Activated T-helper 1 cell treated with anti-CD3 and anti-CD28 coated beads, Interleukin-12 subunit alpha, Interleukin-12 subunit beta, Interleukin-2, Interleukin-4 antibody, amounts not matched to agents 30 ng/mL and 10 ng/mL and 1 ng/mL, durations not matched to agents 14 hours and 24 hours and 36 hours (primary cell): ENCODE measurements at regions of chr18 and their contacts with region 1.

Region 1: DNA sequence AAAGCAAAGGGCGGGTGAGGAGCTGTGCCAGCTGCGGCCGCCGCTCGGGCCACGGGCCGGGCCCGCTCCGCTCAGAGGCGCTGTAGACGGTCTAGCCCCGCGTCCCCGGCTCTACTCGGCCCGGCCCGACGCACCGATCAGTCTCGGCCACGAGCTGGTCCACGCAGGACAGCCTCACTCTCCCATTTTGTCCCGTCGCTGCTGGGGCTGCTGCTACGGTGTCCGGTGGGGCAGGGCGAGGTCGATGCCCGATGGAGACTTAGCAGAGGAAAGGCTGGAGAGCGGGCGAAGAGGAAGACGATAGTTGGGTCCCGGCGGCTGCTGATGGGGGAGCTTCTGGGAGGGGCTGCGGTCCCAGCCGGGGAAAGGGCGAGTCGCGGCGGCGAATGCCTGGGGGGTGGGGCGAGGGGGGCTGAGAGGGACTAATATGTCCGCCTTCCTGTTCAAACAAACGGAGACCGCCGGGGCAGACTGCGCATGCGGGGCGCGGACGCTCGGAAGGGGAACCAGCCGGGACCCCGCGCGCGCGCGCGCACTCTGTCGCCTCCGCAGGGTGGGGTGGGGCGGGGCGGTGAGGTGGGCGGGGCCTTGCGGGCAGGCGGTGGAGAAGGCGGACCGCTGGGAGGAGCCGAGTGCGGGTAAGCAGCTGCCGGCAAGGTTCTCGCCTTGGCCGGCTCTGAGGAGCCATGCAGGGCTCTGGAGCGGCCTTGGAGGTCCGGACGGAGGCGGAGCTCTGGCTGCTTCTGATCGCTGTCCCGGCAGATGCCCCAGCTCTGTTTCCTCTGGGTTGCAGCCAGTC is at the start of gene ROCK1:
- DNase-seq: peak; percentile 96
- H3K4me3 Mint-ChIP-seq: no peak within 1 kb of the TSS
- H3K27ac Mint-ChIP-seq: peak within 1 kb of the TSS; percentile 97
- H3K4me1 Mint-ChIP-seq: peaks cover 7% of the 10 kb centered on the region
- H3K27me3 Mint-ChIP-seq: peaks cover 8% of the 10 kb centered on the region
- total RNA-seq, gene ROCK1: 58.6 and 62.1 TPM in 2 replicates

Region 2: DNA sequence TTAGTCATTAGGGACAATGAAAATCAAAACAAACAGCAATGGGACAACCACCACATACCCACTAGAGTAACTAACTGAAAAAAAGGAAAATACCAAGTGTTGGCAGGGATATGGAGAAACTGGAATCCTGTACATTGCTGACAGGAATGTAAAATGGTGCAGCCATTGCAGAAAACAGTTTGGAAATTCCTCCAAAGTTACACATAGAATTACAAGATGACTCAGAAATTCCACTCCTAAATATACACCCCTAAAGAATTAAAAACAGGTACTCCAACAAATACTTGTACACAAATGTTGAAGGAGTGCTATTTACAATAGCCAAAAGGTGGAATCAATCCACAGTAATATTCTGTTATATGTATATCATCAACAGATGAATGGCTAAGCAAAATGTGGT is 110.9 kb before region 1 on chr18:
- intact Hi-C with region 1: loop called (anchors 2 kb)
- DNase-seq: no peak
- H3K4me3 Mint-ChIP-seq: no peak overlapping the region
- H3K27ac Mint-ChIP-seq: peak overlapping the region; percentile 77
- H3K4me1 Mint-ChIP-seq: peaks cover 16% of the 10 kb centered on the region
- H3K27me3 Mint-ChIP-seq: no peaks in the 10 kb centered on the region

Region 3: GRCh38 chr18:21069468-21069867 is 42.1 kb before region 1 on chr18:
- intact Hi-C with region 1: loop called (anchors 5 kb)
- DNase-seq: no peak
- H3K4me3 Mint-ChIP-seq: no peak overlapping the region
- H3K27ac Mint-ChIP-seq: no peak overlapping the region
- H3K4me1 Mint-ChIP-seq: peaks cover 22% of the 10 kb centered on the region
- H3K27me3 Mint-ChIP-seq: no peaks in the 10 kb centered on the region

Region 4: DNA sequence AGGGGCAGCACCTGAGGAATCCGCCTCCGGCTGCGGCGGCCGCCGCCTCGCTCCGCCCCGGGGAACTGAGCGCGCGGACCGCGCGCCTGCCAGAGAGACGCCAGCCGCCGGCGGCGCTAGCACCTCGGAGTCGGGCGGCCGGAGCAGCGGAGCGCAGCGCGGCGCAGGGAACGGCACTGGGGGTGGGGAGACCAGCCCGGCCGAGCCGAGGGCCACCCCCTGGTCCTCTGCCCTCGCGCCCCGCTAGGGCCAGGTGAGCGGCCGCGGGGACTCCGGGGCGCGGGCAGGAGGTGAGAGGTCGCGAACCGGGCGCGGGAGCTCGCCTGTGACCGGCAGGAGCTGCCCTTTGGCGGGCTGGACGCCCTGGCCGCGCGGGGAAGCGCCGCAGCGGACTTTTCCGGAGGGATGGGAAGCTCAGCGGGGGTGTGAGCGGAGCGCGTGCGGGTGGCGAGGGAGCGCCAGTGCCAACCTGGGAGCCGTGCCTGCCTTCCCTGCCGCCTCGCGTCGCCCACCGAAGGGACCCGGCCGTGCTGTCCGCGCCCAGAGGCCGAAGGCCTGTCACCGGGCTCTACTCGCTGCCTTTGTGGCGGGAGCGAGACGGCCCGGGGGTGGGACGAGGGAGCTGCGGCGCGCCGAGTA is 130.7 kb after region 1 on chr18 and contains the start of gene GREB1L:
- intact Hi-C with region 1: no loop called
- DNase-seq: no peak
- H3K4me3 Mint-ChIP-seq: no peak within 1 kb of the TSS
- H3K27ac Mint-ChIP-seq: no peak within 1 kb of the TSS
- H3K4me1 Mint-ChIP-seq: no peaks in the 10 kb centered on the region
- H3K27me3 Mint-ChIP-seq: peaks cover 59% of the 10 kb centered on the region
- total RNA-seq, gene GREB1L: not detected in 2 replicates

Region 5: GRCh38 chr18:21444465-21445023 is 333.0 kb after region 1 on chr18:
- intact Hi-C with region 1: no loop called
- DNase-seq: no peak
- H3K4me3 Mint-ChIP-seq: no peak overlapping the region
- H3K27ac Mint-ChIP-seq: no peak overlapping the region
- H3K4me1 Mint-ChIP-seq: no peaks in the 10 kb centered on the region
- H3K27me3 Mint-ChIP-seq: peaks cover 8% of the 10 kb centered on the region

Region 6: DNA sequence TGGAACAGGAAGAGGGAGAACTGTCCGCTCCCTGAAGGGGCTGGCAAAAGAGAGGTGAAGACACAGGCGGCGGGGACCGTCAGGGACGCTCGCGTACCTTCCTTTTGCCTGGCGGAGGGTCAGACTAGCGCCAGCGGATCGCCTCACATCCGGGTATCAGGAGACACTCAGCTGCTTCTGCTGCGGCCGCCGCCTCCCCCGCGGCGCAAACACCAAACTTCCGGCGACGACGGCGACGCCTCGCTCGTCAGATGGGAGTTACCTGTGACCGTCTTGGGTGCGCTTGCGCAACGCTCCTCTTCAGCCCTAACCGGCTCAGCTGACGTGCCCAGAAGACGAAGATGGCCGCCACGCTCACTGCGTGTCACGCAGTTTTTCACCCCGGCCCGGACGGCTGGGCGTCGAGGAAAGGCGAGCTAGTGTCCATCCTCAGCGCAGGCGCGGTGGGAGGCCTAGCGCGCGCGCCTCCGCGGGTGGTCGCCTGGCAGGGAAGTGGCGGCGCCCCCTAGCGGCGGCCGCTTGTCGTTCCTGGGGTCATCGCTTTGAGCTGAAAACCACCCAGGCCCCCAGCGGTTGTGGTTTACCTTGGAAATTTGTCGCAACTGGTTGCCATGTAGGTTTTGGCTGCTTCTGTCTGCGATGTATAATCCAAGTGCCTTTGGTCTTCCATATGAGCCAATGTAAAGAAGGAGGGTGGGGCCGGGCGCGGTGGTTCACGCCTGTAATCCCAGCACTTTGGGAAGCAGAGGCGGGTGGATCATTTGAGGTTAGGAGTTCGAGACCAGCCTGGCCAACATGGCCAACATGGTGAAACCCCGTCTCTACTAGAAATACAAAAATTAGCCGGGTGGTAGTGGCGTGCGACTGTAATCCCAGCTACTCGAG is 489.2 kb after region 1 on chr18 and contains the start of gene ESCO1:
- intact Hi-C with region 1: loop called (anchors 1 kb)
- DNase-seq: peak; percentile 94
- H3K4me3 Mint-ChIP-seq: peak within 1 kb of the TSS; percentile 94
- H3K27ac Mint-ChIP-seq: peak within 1 kb of the TSS; percentile 99
- H3K4me1 Mint-ChIP-seq: peaks cover 20% of the 10 kb centered on the region
- H3K27me3 Mint-ChIP-seq: no peaks in the 10 kb centered on the region
- total RNA-seq, gene ESCO1: 20.7 and 21.5 TPM in 2 replicates

Region 7: GRCh38 chr18:21704603-21705364 is 593.2 kb after region 1 on chr18 and contains the start of gene ABHD3:
- intact Hi-C with region 1: loop called (anchors 5 kb)
- DNase-seq: peak; percentile 91
- H3K4me3 Mint-ChIP-seq: peak within 1 kb of the TSS; percentile 96
- H3K27ac Mint-ChIP-seq: peak within 1 kb of the TSS; percentile 90
- H3K4me1 Mint-ChIP-seq: peaks cover 34% of the 10 kb centered on the region
- H3K27me3 Mint-ChIP-seq: no peaks in the 10 kb centered on the region
- total RNA-seq, gene ABHD3: 29.2 and 36.0 TPM in 2 replicates